ENCODE measurements at regions of chr2 and their contacts with region 1.

Region 1: DNA sequence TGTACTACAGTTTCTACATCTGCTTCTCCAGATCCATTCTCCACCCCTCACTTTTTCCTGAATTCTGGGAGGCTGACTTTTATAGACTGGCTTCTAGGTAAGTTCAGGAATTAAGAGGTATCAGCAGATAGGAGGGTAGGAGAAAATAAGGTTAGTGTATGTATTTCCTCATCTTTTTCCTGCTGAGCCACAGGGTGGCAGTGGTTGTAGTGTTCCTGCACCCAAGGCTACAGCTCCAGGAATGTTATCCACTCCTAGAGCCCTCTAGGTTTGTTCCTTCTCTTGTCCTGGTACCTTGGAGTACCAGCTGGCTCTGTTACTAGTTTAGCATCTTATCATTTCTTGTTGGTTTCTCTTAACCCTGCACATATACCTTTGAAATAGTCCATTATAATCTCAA is 40.7 kb upstream of the C2orf66 start:
- DNase-seq: peak; percentile 41 to 43
- H3K4me3 ChIP-seq: no peak overlapping the region
- H3K4me3 Mint-ChIP-seq: no peak overlapping the region
- H3K27ac Mint-ChIP-seq: no peak overlapping the region
- H3K4me1 ChIP-seq: no peaks in the 10 kb centered on the region
- H3K4me1 Mint-ChIP-seq: no peaks in the 10 kb centered on the region
- H3K27me3 ChIP-seq: no peaks in the 10 kb centered on the region
- H3K27me3 Mint-ChIP-seq: no peaks in the 10 kb centered on the region
- CTCF ChIP-seq: peak; percentile 30 to 63

Region 2: GRCh38 chr2:196949116-196949515 is 99.2 kb after region 1 on chr2:
- CTCF ChIA-PET with region 1: no interaction called
- POLR2A ChIA-PET with region 1: no interaction called
- intact Hi-C with region 1: loop called (anchors 2 kb)
- DNase-seq: no peak
- H3K4me3 ChIP-seq: no peak overlapping the region
- H3K4me3 Mint-ChIP-seq: no peak overlapping the region
- H3K27ac Mint-ChIP-seq: no peak overlapping the region
- H3K4me1 ChIP-seq: 0 out of 2 replicates have a peak, but pooled peaks cover 2% of the 10 kb centered on the region
- H3K4me1 Mint-ChIP-seq: no peaks in the 10 kb centered on the region
- H3K27me3 ChIP-seq: no peaks in the 10 kb centered on the region
- H3K27me3 Mint-ChIP-seq: peaks cover 15% of the 10 kb centered on the region
- CTCF ChIP-seq: no peak

Region 3: DNA sequence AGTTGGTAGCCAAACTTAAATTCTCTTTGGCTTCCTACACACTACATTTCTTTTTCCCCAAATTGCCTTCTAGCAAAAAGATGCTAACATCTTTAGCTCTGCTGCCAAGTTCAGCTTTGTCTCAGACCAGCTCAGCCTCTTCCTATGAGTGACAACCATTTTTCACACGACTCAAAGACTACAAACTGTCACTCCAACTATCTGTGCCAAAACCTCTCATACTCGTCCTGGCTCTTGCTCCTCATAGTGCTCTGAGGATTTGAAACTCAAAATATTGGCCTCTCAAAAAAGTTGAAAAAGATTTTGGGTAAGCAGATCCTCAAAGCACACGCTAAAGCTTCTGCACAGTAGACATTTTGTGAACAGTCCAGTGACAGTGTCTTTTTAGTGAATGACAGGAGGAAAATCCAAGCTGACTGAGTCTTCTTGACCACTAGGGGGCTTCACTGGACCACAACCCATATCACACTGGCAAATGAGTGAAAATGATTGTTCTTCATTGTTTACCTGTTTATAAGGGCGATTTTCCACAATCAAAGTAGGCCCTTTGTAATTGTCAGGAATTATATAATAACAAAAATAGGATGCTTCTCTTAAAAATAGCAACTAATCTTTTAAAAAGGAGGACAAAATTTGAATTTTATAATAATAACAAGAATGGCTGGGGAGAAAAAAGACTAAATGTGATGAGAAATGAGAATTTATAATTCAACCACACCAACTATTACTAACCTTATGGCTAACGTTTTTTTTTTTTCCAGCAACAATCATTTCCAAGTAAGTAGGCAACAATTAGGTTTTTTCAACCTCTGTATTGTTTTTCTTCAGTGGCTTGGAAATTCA is 162.1 kb after region 1 on chr2:
- CTCF ChIA-PET with region 1: no interaction called
- POLR2A ChIA-PET with region 1: no interaction called
- intact Hi-C with region 1: loop called (anchors 5 kb)
- DNase-seq: peak; percentile 43 to 51
- H3K4me3 ChIP-seq: no peak overlapping the region
- H3K4me3 Mint-ChIP-seq: no peak overlapping the region
- H3K27ac Mint-ChIP-seq: no peak overlapping the region
- H3K4me1 ChIP-seq: no peaks in the 10 kb centered on the region
- H3K4me1 Mint-ChIP-seq: no peaks in the 10 kb centered on the region
- H3K27me3 ChIP-seq: no peaks in the 10 kb centered on the region
- H3K27me3 Mint-ChIP-seq: peaks cover 22% of the 10 kb centered on the region
- CTCF ChIP-seq: peak; percentile 73 to 88

Region 4: DNA sequence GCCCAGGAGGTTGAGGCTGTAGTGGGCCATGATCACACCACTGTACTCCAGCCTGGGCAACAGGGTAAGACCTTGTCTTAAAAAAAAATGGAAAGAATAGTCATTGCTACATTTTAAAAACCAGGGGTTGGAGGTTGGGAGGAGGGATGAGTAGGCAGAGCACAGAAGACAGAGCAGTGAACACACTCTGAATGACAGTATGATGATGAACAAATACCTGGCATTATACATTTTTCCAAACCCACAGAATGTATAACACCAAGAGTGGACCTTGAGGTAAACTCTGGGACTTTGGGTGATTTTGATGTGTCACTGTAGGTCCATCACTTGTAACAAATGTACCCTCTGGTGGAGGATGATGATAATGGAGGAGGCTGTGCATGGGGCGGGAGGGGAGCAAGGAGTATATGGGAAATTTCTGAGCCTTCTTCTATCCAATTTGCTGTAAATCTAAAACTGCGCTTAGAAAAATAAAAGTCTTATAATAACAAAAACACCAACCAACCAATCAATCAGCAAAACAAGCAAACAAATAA is 188.0 kb after region 1 on chr2:
- CTCF ChIA-PET with region 1: no interaction called
- POLR2A ChIA-PET with region 1: no interaction called
- intact Hi-C with region 1: loop called (anchors 1 kb)
- DNase-seq: no peak
- H3K4me3 ChIP-seq: no peak overlapping the region
- H3K4me3 Mint-ChIP-seq: no peak overlapping the region
- H3K27ac Mint-ChIP-seq: no peak overlapping the region
- H3K4me1 ChIP-seq: no peaks in the 10 kb centered on the region
- H3K4me1 Mint-ChIP-seq: no peaks in the 10 kb centered on the region
- H3K27me3 ChIP-seq: no peaks in the 10 kb centered on the region
- H3K27me3 Mint-ChIP-seq: no peaks in the 10 kb centered on the region
- CTCF ChIP-seq: no peak